PC-3 (cell line): ENCODE measurements at regions of chr4 and their contacts with region 1.

Region 1: DNA sequence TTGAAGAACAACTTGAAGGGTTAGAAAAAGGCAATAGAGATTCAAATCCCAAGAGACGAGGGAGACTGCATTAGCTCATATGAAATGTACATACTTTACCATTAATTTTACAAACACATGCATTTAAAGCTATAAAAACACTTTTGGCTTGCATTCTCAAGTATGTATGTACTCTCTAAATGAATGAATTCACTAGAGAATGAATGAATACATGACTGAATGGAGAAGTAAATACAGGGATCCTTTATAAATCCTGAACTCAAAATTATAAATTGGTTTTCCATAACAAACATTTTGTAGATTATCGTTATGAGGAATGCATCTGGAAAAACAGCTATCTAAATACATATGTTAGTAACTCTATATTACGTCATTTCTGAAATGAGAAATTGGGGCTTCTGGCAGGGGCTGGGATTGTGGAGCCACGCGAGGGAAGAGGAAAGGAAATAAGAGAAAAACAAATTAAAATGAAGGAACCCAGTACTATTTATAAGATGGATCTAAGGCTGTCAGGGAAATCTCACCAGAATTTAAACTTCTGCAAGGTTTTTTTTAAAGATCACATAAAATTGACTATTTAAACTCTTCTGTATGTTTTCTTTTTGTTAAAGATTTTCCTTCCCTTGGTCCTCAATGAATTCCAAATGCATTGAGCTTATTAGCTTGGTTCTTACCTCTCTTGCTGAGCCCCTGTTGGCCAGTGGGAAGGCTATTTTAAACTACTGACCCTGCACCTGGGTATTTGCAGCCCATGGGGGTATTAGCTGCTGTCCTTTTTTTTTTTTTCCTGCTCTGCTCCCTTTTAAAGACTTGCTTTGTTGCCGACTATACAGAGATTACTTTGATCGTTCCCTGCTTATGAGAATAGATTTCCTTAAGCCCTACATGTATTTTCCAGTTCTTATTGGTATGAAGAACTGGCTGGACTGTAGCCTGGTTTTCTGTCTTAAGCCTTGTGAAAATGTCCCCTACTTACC is 207.8 kb downstream of the ADGRL3 start:
- DNase-seq: no peak
- ATAC-seq: no peak
- H3K4me3 ChIP-seq: no peak overlapping the region
- H3K27ac ChIP-seq: no peak overlapping the region
- H3K4me1 ChIP-seq: peaks cover 10% of the 10 kb centered on the region
- H3K27me3 ChIP-seq: no peaks in the 10 kb centered on the region
- CTCF ChIP-seq: no peak

Region 2: DNA sequence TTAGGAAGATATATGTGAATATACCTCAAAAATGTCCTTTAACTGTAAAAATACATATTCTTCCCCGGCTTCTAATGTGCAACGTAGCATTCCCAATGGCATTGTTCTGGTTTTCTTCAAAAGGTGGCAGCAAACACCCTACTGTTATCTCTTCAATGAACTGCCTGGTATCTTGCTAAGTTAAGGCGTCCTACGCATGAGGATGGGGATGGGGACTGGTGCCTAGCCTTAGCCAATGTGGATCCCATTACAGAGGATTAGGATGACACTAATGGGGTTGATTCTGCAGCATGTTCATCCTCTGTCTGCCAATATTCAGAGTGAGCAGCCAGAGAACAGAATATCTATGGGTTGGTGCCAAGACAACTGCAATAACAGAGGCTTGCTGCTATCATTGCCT is 542.7 kb before region 1 on chr4:
- CTCF ChIA-PET with region 1: no interaction called
- POLR2A ChIA-PET with region 1: no interaction called
- intact Hi-C with region 1: loop called (anchors 10 kb)
- DNase-seq: peak; percentile 53
- ATAC-seq: peak; percentile 57; the same call in 1 of the 2 replicates
- H3K4me3 ChIP-seq: no peak overlapping the region
- H3K27ac ChIP-seq: no peak overlapping the region
- H3K4me1 ChIP-seq: peaks cover 10% of the 10 kb centered on the region
- H3K27me3 ChIP-seq: no peaks in the 10 kb centered on the region
- CTCF ChIP-seq: peak; percentile 63

Region 3: DNA sequence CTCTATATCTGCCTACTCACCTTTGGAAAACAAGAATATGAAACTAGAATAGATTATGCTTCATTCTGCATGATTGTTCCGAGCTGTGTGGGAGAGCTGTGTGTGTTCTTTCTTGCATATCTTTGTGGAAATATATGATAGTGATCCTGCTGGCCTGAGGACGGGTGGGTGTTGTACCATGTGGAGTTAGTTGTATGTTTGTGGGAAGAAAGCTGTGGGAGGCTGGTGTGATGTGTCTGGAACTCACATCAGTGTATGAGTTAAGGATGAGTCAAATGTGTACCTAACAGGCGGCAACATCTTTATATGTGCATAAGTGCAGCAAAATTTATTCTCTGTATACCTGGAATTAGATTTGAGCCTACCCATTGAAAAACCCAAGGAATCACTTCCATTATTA is 415.9 kb before region 1 on chr4:
- CTCF ChIA-PET with region 1: no interaction called
- POLR2A ChIA-PET with region 1: no interaction called
- intact Hi-C with region 1: loop called (anchors 10 kb)
- DNase-seq: peak; percentile 91
- ATAC-seq: peak; percentile 96
- H3K4me3 ChIP-seq: no peak overlapping the region
- H3K27ac ChIP-seq: peak overlapping the region; percentile 62
- H3K4me1 ChIP-seq: peaks cover 40% of the 10 kb centered on the region
- H3K27me3 ChIP-seq: no peaks in the 10 kb centered on the region
- CTCF ChIP-seq: no peak

Region 4: DNA sequence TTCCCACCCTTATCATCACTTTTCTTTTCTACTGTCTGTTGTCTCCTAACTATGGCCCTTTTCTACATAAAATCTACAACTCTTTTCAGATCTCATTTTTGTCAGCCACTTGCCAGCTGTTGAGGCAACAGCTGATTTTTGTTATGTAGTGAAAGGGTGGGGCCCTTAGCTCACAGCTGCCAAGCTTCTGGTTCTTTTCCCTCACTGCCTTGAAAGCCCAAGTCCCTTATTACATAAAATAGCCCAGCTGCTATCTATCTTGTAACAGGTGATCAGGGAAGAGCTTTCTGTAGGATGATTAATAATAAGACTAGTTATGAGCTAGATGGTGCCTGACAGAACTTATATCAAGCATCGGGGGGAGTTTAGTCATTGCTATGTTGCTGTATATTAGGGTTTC is 161.9 kb before region 1 on chr4:
- CTCF ChIA-PET with region 1: no interaction called
- POLR2A ChIA-PET with region 1: no interaction called
- intact Hi-C with region 1: loop called (anchors 10 kb)
- DNase-seq: no peak
- ATAC-seq: no peak
- H3K4me3 ChIP-seq: no peak overlapping the region
- H3K27ac ChIP-seq: no peak overlapping the region
- H3K4me1 ChIP-seq: peaks cover 15% of the 10 kb centered on the region
- H3K27me3 ChIP-seq: no peaks in the 10 kb centered on the region
- CTCF ChIP-seq: no peak

Region 5: GRCh38 chr4:61500883-61501282 is 93.0 kb after region 1 on chr4:
- CTCF ChIA-PET with region 1: no interaction called
- POLR2A ChIA-PET with region 1: no interaction called
- intact Hi-C with region 1: loop called (anchors 10 kb)
- DNase-seq: peak; percentile 67
- ATAC-seq: peak; percentile 84
- H3K4me3 ChIP-seq: no peak overlapping the region
- H3K27ac ChIP-seq: no peak overlapping the region
- H3K4me1 ChIP-seq: peaks cover 7% of the 10 kb centered on the region; the same call in 1 of the 2 replicates
- H3K27me3 ChIP-seq: no peaks in the 10 kb centered on the region
- CTCF ChIP-seq: peak; percentile 78